ENCODE measurements at regions of chr7 and their contacts with region 1.

Region 1: GRCh38 chr7:21261627-21262594 is 166.0 kb upstream of the SP4 start:
- DNase-seq: peak; percentile 78
- H3K4me3 Mint-ChIP-seq: no peak overlapping the region
- H3K27ac Mint-ChIP-seq: no peak overlapping the region
- H3K4me1 Mint-ChIP-seq: no peaks in the 10 kb centered on the region
- H3K27me3 Mint-ChIP-seq: peaks cover 13% of the 10 kb centered on the region
- CTCF ChIP-seq: peak; percentile 88

Region 2: DNA sequence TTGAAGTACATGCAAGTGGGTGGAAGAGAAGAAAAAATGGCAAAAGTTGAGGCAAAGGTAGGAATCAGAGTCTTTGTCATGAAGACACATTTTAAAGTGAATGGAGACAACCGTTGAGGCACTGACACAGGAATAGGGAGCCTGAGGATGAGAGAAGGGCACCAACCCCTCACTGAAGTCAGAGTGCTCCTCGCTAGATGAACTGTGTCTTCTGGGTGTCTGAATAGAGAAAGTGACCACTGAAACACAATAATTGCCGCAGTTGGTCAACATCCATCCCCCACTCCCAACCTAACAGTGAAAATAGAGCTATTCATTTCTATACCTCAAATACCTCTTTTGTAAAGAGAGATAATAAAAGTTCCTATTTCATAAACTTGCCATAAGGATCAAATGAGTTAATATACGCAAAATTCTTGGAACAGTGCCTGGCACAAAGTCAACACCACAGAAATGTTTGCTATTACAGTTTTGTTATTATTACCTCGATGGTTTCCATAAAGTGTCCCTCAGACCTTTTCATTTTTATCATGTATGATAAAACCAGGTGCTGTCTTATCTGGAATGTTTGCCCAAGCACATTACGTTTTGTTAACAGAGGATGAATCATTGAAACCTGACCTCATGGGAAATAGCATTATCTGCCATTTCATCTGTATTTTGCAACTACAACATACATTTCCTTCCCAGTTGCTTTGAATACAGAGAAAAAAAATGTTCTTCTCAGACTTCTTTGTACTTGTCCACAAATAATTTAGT is 104.1 kb after region 1 on chr7:
- CTCF ChIA-PET with region 1: interaction called, 3 read pairs
- intact Hi-C with region 1: loop called (anchors 5 kb)
- DNase-seq: peak; percentile 69
- H3K4me3 Mint-ChIP-seq: peak overlapping the region; percentile 6
- H3K27ac Mint-ChIP-seq: peak overlapping the region; percentile 0
- H3K4me1 Mint-ChIP-seq: peaks cover 60% of the 10 kb centered on the region
- H3K27me3 Mint-ChIP-seq: no peaks in the 10 kb centered on the region
- CTCF ChIP-seq: no peak

Region 3: DNA sequence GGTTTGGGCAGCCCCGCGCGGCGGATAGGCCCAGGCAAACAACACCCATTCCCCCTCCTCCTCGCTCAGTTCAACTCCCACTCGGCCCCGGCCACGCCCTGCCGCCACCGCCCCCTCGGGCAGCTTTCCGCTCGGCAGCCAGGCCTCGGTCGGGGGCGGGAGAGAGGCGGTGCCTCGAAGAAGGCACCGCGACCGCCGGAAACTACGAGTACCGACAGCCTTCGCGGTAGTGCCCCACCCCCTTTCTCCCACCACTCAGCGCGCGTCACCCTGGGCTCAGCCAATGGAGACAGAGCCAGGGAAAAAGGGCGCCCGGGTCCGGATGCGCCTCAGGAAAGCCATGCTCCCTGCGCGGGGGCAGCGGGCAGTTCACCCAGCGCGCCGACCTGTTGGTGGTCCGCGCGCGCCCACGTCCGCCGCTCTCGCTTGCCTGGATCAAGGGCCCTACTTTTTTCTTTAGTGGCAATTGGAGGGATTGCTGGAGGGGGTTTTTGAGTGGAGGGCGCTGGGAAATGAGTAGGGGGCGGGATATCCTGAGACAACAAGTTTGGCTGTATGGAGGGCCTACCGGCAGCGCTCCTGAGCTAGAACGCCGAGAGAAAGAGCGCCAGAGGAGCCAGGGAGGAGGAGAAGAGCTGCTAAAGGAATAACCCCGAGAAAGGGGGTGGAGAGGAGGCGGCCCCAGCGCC is 165.4 kb after region 1 on chr7:
- CTCF ChIA-PET with region 1: interaction called, 6 read pairs
- intact Hi-C with region 1: loop called (anchors 2 kb)
- DNase-seq: peak; percentile 100
- H3K4me3 Mint-ChIP-seq: peak overlapping the region; percentile 99
- H3K27ac Mint-ChIP-seq: peak overlapping the region; percentile 96
- H3K4me1 Mint-ChIP-seq: peaks cover 30% of the 10 kb centered on the region
- H3K27me3 Mint-ChIP-seq: no peaks in the 10 kb centered on the region
- CTCF ChIP-seq: no peak

Region 4: GRCh38 chr7:21507626-21508343 is 245.9 kb after region 1 on chr7:
- CTCF ChIA-PET with region 1: interaction called, 8 read pairs
- intact Hi-C with region 1: loop called (anchors 1 kb)
- DNase-seq: peak; percentile 80
- H3K4me3 Mint-ChIP-seq: no peak overlapping the region
- H3K27ac Mint-ChIP-seq: no peak overlapping the region
- H3K4me1 Mint-ChIP-seq: peaks cover 20% of the 10 kb centered on the region
- H3K27me3 Mint-ChIP-seq: no peaks in the 10 kb centered on the region
- CTCF ChIP-seq: peak; percentile 87

Region 5: DNA sequence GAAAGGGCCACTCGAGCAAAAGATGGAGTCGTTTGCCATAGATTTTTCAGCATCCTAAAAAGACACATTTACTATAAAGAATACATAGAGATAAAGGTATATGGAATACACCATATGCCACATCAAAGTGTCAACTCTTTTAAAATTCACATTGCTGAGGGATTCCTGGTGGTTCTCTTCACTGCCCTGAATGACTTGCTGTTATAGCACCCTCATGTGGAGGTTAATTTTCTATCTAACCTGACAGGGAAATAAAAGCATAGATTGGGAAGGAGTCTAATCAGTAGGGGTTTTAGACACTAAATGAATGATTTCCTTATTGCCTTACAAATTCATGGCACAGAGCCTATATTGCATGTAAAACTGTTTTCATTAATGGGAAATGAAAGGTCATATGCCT is 306.9 kb after region 1 on chr7:
- CTCF ChIA-PET with region 1: no interaction called
- intact Hi-C with region 1: loop called (anchors 1 kb)
- DNase-seq: peak; percentile 24
- H3K4me3 Mint-ChIP-seq: no peak overlapping the region
- H3K27ac Mint-ChIP-seq: no peak overlapping the region
- H3K4me1 Mint-ChIP-seq: peaks cover 11% of the 10 kb centered on the region
- H3K27me3 Mint-ChIP-seq: no peaks in the 10 kb centered on the region
- CTCF ChIP-seq: no peak

Region 6: DNA sequence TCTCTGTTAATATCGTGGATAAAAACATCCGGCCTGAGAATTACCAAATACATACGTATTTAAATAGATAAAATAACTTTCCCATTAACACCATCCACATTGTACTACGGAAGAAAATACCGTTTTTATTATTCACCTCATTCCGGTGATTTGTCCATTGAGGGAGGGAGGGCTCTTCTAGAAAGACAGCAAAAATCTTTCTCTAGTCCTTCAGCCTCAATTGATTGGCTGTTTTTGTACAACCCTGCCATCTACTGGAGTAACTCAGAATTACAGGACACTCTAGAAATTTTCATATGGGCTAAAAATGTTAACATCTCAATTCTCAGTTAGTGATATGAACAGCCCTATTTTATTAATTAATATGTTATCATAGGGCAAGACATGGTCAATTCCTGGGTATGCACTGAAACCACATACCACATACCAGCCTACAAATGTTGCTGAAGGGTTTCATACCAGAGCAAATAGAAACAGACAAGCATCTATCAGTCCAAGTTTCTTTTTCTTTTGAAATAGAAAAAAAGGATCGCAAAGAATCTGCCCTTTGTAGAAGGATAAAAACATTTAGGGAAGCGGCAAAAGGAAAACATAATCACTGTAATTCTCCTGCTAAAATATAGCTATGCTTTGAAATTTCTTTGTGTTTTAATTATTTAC is 739.6 kb after region 1 on chr7:
- CTCF ChIA-PET with region 1: interaction called, 4 read pairs
- intact Hi-C with region 1: loop called (anchors 1 kb)
- DNase-seq: peak; percentile 69
- H3K4me3 Mint-ChIP-seq: no peak overlapping the region
- H3K27ac Mint-ChIP-seq: no peak overlapping the region
- H3K4me1 Mint-ChIP-seq: peaks cover 5% of the 10 kb centered on the region
- H3K27me3 Mint-ChIP-seq: peaks cover 33% of the 10 kb centered on the region
- CTCF ChIP-seq: peak; percentile 83

Region 7: DNA sequence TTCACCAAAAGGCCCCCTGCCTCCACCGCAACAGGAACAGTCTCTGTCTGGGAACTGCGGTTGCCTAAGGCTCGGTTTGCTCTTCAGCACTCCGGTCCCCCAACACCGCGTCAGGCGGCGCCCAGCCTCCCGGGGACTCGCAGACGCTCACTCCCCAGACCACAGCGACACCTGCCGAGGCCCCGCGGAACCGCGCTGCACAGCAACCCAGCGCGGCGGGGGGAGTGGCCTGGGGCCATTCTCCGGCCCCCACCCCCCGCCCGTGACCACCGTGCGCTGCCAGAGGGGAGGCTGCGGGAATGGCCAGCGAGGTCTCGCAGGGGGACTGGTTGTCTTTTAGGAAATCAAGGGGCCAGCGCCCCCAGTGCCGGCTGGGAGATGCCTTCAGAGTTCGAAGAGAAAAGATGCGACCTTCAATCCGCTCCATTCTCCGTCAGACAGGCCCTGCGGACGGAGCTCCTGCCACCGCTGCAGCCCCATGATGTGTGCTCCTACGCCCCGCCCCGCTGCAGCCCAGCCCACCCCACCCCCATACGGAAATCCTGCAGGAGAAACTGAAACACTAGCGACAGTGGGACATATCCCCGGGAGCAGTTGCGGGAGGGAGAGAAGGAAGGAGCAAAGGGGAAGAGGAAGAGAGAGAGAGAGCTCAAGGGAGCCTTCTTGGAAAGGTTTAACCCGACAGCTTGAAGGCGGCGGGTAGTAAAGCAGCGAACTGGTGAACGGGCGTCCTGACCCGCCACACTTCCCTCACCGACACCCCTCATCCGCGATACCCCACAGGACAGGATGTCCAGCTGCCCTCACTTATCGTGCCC is 821.2 kb after region 1 on chr7:
- CTCF ChIA-PET with region 1: interaction called, 5 read pairs
- intact Hi-C with region 1: loop called (anchors 10 kb)
- DNase-seq: peak; percentile 99
- H3K4me3 Mint-ChIP-seq: peak overlapping the region; percentile 89
- H3K27ac Mint-ChIP-seq: peak overlapping the region; percentile 95
- H3K4me1 Mint-ChIP-seq: peaks cover 18% of the 10 kb centered on the region
- H3K27me3 Mint-ChIP-seq: peaks cover 40% of the 10 kb centered on the region
- CTCF ChIP-seq: peak; percentile 99